Astrocyte of the cerebellum (primary cell): ENCODE measurements at regions of chr4 and their contacts with region 1.

Region 1: DNA sequence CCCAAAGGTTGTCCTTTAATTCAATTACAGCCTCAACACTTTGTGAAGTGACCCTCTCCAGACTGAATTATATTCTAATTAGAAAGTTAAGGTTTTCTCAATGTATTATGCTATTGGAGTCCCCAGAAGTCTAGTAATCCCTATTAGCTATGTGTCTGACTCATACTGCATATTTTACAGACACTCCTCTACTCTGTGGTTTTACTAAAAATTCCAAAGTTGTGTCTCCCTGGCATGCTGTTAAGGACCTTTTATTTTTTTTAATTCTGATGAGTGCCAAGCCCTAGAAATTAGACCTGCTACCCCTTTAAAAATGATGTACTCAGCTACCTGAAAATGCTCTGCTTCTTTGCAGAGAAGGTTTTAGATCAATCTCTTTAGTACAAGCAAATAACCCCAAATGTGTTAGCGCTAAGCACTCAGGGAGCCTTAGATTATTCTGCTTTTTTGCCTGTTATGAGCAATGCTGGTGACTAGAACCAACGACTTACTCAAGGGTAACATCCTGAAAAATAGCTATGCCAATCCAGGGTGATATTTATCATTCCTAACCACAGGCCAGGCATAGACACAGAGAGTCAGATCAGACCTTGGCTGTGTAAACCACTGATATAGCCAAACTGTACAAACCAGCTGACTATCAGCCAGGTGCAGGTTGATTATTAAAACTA is 26.1 kb upstream of the CXCL13 start:
- DNase-seq: peak; percentile 76
- H3K4me3 ChIP-seq: no peak overlapping the region
- CTCF ChIP-seq: no peak

Region 2: GRCh38 chr4:77493120-77493752 is 86.3 kb before region 1 on chr4:
- in situ Hi-C with region 1: loop called (anchors 5 kb)
- DNase-seq: no peak
- H3K4me3 ChIP-seq: no peak overlapping the region
- CTCF ChIP-seq: no peak